WTC11 (cell line): ENCODE measurements at regions of chr11 and their contacts with region 1.

Region 1: DNA sequence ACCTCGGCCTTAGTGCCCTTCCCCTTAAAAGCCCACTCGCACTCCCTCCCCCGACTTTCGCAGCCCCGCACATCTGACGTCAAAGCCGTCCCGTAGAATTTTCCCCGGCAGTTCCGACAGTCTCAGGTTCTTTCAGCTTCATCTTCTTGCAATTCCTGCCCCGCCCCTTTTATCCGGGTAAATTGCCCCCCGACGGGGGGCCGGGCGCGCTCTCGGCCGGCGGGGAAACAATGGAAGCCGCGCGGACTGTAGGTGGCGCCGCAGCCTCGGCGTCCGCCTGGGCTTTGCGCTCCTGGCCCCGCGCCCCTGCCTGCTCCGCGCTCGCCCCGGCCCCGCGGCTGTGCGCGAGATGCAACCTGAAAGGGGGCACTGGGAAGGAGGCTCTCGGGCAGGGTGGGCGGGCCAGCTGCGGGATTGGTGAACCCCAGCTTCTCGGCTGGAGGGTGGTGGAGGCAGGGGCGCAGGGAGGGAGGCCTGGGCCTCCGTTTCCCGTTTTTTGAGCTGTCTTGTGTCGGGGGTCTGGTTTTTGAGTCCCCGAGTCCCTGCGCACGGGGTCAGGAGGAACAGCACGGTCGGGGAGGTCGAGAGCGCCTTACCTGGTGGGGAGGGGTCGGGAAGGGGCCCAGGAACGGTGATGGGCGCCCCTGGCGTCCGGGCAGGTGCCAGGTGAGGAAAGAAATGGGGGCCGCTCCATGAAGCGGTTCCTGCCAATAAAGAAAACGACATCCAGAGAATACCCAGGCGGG is 859 bp upstream of the FGF19 start:
- DNase-seq: peak; percentile 94
- ATAC-seq: peak; percentile 38
- H3K4me3 Mint-ChIP-seq: peak overlapping the region; percentile 86
- H3K27ac Mint-ChIP-seq: peak overlapping the region; percentile 96
- H3K4me1 Mint-ChIP-seq: peaks cover 52% of the 10 kb centered on the region
- H3K27me3 Mint-ChIP-seq: peaks cover 7% of the 10 kb centered on the region
- CTCF ChIP-seq: no peak

Region 2: DNA sequence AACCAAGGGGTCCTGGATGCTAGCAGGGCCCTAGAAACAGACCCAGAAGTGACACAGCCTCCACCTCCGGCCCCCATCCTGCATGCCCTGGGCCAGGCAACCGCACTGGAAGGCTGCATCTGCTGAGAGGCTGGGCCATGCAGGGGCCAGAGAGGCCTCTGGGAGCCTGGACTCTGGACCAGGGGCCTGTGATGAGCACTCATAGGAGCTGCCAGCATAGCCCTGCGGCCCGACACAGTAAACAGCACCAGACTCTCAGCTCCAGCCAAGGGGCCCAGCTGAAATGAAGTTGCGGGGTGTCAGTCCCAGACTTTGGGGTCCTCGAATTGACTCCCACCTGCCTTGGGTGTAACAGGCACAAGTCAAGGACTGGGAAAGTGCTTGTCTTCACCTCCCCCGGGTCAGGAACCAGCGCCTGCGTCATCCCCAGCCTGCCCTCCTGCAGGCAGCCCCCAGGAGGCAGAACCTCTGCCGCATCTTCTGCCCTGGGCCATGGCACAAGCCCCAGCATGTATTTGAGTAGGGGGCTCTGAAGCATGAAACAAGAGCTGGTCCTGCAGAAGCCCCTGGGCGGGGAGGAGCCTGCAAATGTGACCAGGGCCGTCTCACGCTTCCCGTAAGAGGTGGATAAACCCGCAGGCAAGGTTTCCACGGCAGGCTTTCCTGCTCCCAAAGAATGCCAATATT is 89.0 kb before region 1 on chr11:
- CTCF ChIA-PET with region 1: no interaction called
- POLR2A ChIA-PET with region 1: no interaction called
- DNase-seq: no peak
- ATAC-seq: no peak
- H3K4me3 Mint-ChIP-seq: no peak overlapping the region
- H3K27ac Mint-ChIP-seq: no peak overlapping the region
- H3K4me1 Mint-ChIP-seq: peaks cover 26% of the 10 kb centered on the region
- H3K27me3 Mint-ChIP-seq: peaks cover 3% of the 10 kb centered on the region
- CTCF ChIP-seq: no peak

Region 3: DNA sequence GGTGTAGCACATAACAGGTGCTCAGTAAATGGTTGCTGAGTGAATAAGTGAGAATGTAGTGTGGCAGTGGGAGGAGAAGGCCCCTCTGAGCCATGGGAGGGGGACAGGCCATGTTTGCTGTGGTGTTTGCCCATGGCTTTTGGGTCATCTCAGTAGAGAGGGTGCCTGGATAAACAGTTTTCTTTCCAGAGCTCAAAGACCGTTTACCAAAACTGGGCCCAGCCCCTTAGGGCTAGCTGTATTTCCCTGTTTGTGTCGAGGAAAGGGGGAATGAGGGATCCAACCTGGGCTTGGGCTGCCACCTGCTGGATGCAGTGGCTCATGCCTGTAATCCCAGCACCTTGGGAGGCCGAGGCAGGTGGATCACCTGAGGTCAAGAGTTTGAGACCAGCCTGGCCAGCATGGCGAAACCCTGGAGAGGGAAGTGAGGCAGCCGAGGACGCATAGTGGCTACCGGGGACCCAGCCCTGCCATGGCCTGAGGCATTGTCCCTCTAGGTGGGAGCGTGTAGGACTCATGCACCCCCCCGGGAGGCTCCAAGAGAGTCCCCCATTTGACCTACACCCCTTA is 20.8 kb before region 1 on chr11:
- CTCF ChIA-PET with region 1: interaction called, 12 read pairs
- POLR2A ChIA-PET with region 1: no interaction called
- DNase-seq: peak; percentile 75
- ATAC-seq: peak; percentile 69
- H3K4me3 Mint-ChIP-seq: no peak overlapping the region
- H3K27ac Mint-ChIP-seq: no peak overlapping the region
- H3K4me1 Mint-ChIP-seq: peaks cover 5% of the 10 kb centered on the region
- H3K27me3 Mint-ChIP-seq: peaks cover 10% of the 10 kb centered on the region
- CTCF ChIP-seq: peak; percentile 59

Region 4: DNA sequence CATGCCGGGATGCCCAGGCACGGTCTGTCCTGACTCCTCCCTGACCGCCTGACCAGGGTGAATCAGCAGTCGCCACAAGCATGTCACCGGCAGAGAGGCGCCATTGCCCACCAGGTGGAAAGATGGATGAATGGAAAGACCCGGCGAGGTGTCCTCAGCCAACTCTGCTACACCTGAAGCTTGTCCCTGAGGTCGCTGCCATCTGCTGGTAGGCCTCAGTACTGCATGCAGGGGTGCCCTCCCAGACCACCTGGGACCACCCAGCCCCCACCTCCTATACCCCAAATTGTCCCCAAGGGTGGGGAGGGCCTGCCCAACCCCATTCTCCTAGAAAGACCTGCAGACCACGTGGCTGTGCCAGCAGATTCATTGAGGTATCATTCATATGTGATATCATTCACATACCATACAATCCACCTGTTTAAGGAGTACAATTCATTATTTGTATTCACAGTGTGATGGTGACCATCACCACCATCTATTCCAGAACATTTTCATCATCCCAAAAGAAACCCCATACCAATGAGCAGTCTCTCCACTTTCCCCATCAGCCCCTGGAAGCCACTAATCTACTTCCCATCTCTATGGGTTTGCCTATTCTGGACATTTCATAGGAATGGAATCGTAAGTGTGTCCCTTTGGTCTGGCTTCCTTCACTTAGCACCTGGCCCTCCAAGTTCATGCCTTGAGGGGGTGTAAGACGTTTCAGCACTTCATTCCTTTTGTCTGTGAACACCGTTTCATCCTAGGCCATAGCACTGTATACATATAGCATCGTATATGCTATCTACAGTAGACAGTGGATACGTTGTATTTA is 97.0 kb after region 1 on chr11:
- CTCF ChIA-PET with region 1: interaction called, 12 read pairs
- POLR2A ChIA-PET with region 1: no interaction called
- DNase-seq: peak; percentile 95
- ATAC-seq: peak; percentile 83
- H3K4me3 Mint-ChIP-seq: no peak overlapping the region
- H3K27ac Mint-ChIP-seq: no peak overlapping the region
- H3K4me1 Mint-ChIP-seq: no peaks in the 10 kb centered on the region
- H3K27me3 Mint-ChIP-seq: no peaks in the 10 kb centered on the region; the same call in 1 of the 2 replicates
- CTCF ChIP-seq: peak; percentile 97

Region 5: GRCh38 chr11:69881449-69882269 is 177.0 kb after region 1 on chr11:
- CTCF ChIA-PET with region 1: interaction called, 24 read pairs
- POLR2A ChIA-PET with region 1: no interaction called
- DNase-seq: peak; percentile 56
- ATAC-seq: peak; percentile 75
- H3K4me3 Mint-ChIP-seq: no peak overlapping the region
- H3K27ac Mint-ChIP-seq: no peak overlapping the region
- H3K4me1 Mint-ChIP-seq: 0 out of 2 replicates have a peak, but pooled peaks cover 2% of the 10 kb centered on the region
- H3K27me3 Mint-ChIP-seq: no peaks in the 10 kb centered on the region
- CTCF ChIP-seq: no peak; the same call in 1 of the 2 replicates